GM12878 (cell line): ENCODE measurements at regions of chr13 and their contacts with region 1.

Region 1: DNA sequence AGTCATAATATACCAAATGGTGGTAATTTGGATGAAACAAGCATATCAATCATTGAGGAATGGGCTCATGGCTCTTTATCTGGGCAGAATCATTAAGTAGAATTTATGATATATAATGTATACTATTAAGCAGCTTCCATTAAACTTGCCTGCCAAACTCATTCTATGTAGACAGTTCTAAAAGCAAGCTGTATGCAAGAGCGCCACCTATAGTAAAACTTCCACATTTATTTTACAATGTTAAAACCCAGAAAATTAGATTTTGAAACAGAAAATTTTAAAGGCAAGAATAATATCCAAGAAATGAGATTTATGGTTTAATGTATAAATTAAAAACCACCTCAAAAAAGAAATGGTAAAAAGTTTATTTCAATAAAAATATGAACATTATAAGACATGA is 161.5 kb downstream of the MZT1 start:
- DNase-seq: no peak
- ATAC-seq: peak; percentile 68
- H3K4me3 ChIP-seq: no peak overlapping the region
- H3K27ac ChIP-seq: no peak overlapping the region
- H3K4me1 ChIP-seq: no peaks in the 10 kb centered on the region
- H3K27me3 ChIP-seq: no peaks in the 10 kb centered on the region
- CTCF ChIP-seq: peak; percentile 49 to 54 (median 52); a peak in 4 of 6 replicates
- EP300 ChIP-seq: no peak
- POLR2A ChIP-seq: no peak
- RAD21 ChIP-seq: peak; percentile 58

Region 2: GRCh38 chr13:72004784-72005374 is 561.0 kb before region 1 on chr13:
- CTCF ChIA-PET with region 1: no interaction called
- POLR2A ChIA-PET with region 1: no interaction called
- RAD21 ChIA-PET with region 1: no interaction called
- SMC1A ChIA-PET with region 1: no interaction called
- in situ Hi-C with region 1: no loop called
- intact Hi-C with region 1: no loop called
- DNase-seq: no peak
- ATAC-seq: no peak
- H3K4me3 ChIP-seq: no peak overlapping the region
- H3K27ac ChIP-seq: no peak overlapping the region
- H3K4me1 ChIP-seq: no peaks in the 10 kb centered on the region
- H3K27me3 ChIP-seq: no peaks in the 10 kb centered on the region
- CTCF ChIP-seq: no peak
- EP300 ChIP-seq: no peak
- POLR2A ChIP-seq: no peak
- RAD21 ChIP-seq: no peak

Region 3: DNA sequence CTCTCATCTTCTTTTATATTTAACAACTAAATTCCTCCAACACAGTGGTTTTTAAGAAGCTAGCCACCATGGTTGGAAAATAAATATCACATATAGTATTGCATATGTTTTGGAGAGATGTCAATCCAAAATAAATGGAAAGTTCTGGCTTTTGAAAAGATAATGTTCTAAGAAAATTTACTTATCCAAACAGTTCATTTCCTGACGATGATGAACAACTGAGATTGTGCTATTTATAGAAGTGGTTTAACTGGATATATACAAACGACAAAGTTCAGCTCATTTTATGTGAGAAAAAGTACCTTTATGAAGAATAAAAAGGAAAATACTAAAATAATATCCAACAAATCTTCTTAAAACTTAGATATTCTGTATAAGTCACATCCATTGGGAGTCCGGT is 13.2 kb before region 1 on chr13:
- CTCF ChIA-PET with region 1: interaction called, 10 read pairs
- POLR2A ChIA-PET with region 1: no interaction called
- RAD21 ChIA-PET with region 1: interaction called, 4 read pairs
- SMC1A ChIA-PET with region 1: interaction called, 7 read pairs
- in situ Hi-C with region 1: no loop called
- intact Hi-C with region 1: no loop called
- DNase-seq: no peak
- ATAC-seq: no peak
- H3K4me3 ChIP-seq: no peak overlapping the region
- H3K27ac ChIP-seq: no peak overlapping the region
- H3K4me1 ChIP-seq: no peaks in the 10 kb centered on the region
- H3K27me3 ChIP-seq: no peaks in the 10 kb centered on the region
- CTCF ChIP-seq: no peak
- EP300 ChIP-seq: no peak
- POLR2A ChIP-seq: no peak
- RAD21 ChIP-seq: no peak